Heart right ventricle (tissue), 16 donors: ENCODE measurements at regions of chr4 and their contacts with region 1.

Region 1: DNA sequence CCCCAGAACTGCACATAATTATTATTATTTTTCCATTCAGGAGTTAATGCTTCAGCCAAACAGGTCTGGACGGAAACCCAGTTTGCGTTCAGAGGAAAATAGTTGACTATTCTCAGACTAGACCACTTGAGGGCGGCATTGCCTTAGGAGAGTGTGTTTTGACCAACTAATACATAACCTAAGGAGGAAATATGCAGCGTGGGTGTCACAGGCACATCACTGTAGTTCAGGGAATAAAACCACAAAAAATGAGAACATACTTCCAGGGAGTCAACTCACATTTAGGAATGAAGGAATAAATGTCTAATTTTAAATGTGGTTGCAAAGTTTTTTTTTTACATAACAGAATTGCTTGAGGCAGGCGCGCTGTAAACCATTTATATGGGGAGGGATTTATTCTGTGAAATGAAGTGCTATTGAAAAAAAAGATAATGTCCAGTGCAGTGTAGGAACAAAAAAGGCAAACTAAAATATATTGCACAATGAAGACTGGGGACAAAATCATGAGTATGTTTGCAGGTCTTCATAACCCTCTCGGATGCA is 93.3 kb downstream of the SYNPO2 start:
- DNase-seq: peak in 1 of 2 donors; percentile 79
- ATAC-seq: peak; percentile 54 to 89 (median 80)
- H3K4me3 ChIP-seq: peak overlapping the region in 1 of 10 donors; percentile 4
- H3K27ac ChIP-seq: peak overlapping the region in 5 of 10 donors; percentile 40 to 76 (median 64)
- H3K4me1 ChIP-seq: peaks cover 19 to 75% (median 53%) of the 10 kb centered on the region in 9 donors
- H3K27me3 ChIP-seq: no peaks in the 10 kb centered on the region
- CTCF ChIP-seq: peak; percentile 60 to 88 (median 79)

Region 2: GRCh38 chr4:118278473-118279274 is 703.2 kb before region 1 on chr4:
- intact Hi-C with region 1: no loop called
- DNase-seq: peak; percentile 93
- ATAC-seq: peak; percentile 97 to 100 (median 99)
- H3K4me3 ChIP-seq: peak overlapping the region; percentile 54 to 93 (median 80)
- H3K27ac ChIP-seq: peak overlapping the region; percentile 82 to 98 (median 93)
- H3K4me1 ChIP-seq: peaks cover 3 to 39% (median 26%) of the 10 kb centered on the region in 9 donors
- H3K27me3 ChIP-seq: no peaks in the 10 kb centered on the region
- CTCF ChIP-seq: no peak

Region 3: DNA sequence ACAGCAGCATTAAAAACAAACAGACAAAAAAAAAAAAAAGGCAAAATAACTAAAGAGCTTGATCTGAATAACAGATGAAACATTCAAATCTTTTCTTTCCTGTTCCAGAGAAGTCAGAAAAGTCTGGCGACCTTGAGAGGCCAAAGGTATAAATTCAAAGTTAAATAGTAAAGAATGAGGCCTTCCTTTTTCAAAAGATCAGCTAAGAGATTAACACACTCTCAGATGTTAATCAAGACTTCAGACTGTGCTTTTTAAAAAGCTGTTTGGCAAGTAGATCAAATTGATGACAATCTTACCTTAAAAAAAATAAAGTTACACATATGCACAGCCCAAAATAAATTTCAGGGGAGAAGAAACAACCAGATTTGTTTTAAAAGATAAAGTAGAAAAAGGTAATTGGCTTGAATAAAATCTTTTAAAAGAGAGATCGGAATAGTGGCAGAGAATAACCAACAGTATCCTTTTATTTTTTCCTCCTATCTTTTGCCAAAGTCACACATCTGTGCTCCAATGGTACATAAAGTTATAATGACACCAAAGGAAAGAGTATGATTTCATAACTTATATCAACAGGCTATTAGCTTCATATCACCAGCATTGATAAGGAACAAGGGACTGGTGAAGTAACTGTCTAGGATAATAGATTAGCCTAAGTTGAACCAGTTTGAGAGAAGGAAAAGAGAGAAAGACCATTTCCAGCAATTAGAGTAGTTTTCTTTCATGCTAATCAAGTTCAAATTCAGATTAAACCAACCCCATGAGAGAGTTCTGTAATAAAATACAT is 226.3 kb before region 1 on chr4:
- intact Hi-C with region 1: no loop called
- DNase-seq: no peak
- ATAC-seq: no peak
- H3K4me3 ChIP-seq: no peak overlapping the region
- H3K27ac ChIP-seq: peak overlapping the region; percentile 20 to 77 (median 64)
- H3K4me1 ChIP-seq: peaks cover 8 to 98% (median 87%) of the 10 kb centered on the region in 9 donors
- H3K27me3 ChIP-seq: no peaks in the 10 kb centered on the region
- CTCF ChIP-seq: no peak

Region 4: GRCh38 chr4:118798658-118799057 is 183.3 kb before region 1 on chr4:
- intact Hi-C with region 1: no loop called
- DNase-seq: no peak
- ATAC-seq: peak in 1 of 8 donors; percentile 22
- H3K4me3 ChIP-seq: no peak overlapping the region
- H3K27ac ChIP-seq: no peak overlapping the region
- H3K4me1 ChIP-seq: peaks cover 0 to 13% (median 6%) of the 10 kb centered on the region in 9 donors
- H3K27me3 ChIP-seq: no peaks in the 10 kb centered on the region
- CTCF ChIP-seq: no peak

Region 5: DNA sequence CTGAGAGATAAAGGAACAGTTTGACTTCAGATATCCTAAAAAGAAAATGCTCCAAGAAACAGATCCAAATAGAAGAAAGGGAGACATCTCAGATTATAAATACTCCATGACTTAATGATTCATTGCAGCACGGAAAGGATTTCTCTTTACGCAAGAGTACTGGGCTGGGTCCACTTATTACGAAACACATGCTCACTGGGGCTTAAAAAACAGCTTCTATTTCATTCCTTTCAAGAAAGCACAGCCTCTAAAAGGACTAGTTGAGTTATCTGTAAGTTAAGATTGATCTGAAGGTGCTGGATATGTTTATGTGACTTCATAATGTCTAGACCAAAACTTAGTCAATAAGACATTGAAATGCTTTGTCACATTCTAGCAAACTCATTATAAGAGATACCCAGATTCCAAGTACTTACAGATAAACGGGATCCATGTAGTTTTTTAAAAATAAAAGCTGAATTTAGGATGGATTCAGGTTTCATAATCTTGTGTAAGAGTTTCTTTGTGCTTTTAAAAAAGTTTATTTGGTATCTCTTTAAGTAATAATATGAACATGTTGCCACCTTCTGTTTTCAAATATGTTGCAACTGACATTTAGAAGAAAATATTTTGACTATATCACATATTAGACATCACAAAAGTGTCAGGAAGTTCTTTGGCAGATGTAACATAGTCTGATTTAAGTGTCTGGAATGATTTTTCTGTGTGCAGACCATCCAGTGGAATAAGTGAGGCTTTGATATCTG is 44.2 kb after region 1 on chr4:
- intact Hi-C with region 1: loop called in 3 of 10 experiments (anchors 5 to 10 kb)
- DNase-seq: peak in 1 of 2 donors; percentile 50
- ATAC-seq: peak; percentile 69 to 91 (median 89)
- H3K4me3 ChIP-seq: peak overlapping the region in 4 of 10 donors; percentile 5 to 40 (median 23)
- H3K27ac ChIP-seq: peak overlapping the region; percentile 41 to 92 (median 86)
- H3K4me1 ChIP-seq: peaks cover 7 to 65% (median 43%) of the 10 kb centered on the region in 9 donors
- H3K27me3 ChIP-seq: no peaks in the 10 kb centered on the region
- CTCF ChIP-seq: peak in 1 of 9 donors; percentile 12

Region 6: DNA sequence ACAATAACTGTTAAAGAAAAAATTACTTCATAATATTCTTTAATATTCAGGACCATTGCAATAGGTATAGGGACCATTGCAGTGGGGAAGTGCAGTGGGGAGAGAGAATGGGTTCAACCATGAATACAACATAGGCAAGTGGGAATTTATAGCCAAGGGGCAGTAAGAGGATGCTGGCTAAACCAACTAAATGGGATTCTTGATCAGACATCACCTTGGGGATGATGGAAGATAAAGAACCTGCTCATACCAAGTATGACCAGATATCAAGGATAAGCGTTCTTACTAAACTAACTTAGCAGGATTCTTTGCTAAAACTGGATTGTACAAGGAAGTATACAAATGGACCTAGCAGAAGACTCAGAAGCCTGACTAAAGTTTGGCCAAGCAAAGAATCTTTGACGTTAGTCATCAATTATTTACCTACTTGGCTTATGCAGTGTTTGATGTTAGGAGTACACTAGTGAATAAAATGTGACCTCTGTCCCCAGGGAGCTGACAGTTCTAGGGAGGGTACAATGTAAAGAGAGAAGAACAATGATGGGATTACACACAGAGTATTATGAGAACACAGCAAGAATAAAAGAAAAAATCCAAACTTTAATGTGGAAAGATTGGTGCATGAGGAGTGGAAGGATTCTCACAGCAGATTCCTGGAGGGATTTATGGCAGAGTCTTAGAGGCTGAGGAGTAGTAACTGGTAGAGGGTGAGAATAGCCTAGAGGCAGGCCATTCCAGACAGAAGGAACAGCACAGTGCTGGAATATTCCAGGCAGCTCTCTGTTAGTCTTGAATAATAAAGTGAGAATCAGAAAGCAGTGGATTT is 99.0 kb after region 1 on chr4:
- intact Hi-C with region 1: loop called in 1 of 10 experiments (anchors 5 kb)
- DNase-seq: no peak
- ATAC-seq: peak in 3 of 8 donors; percentile 23 to 56 (median 33)
- H3K4me3 ChIP-seq: no peak overlapping the region
- H3K27ac ChIP-seq: peak overlapping the region in 6 of 10 donors; percentile 10 to 70 (median 38)
- H3K4me1 ChIP-seq: peaks cover 0 to 16% (median 8%) of the 10 kb centered on the region in 9 donors
- H3K27me3 ChIP-seq: no peaks in the 10 kb centered on the region
- CTCF ChIP-seq: no peak

Region 7: DNA sequence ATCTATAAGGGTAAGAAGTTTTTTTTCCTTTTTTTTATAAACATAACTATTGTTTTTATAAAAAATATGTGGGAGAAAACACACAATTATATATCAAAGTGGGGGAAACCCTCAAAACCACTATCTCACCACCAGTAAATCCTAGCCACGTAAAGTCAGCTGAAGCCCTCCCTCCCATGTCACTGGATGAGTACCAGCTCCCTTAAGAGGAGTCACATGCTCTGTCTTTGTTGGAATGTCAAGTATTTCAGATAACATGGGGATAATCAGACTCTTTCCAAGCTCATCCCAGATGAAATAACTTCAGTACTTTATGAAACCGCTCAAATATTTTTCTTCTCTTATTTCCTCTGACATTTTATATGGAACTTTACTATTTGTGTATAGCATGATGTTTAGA is 156.1 kb after region 1 on chr4:
- intact Hi-C with region 1: loop called in 3 of 10 experiments (anchors 5 to 10 kb)
- DNase-seq: no peak
- ATAC-seq: peak in 6 of 8 donors; percentile 35 to 76 (median 70)
- H3K4me3 ChIP-seq: peak overlapping the region; percentile 11 to 60 (median 47)
- H3K27ac ChIP-seq: peak overlapping the region in 9 of 10 donors; percentile 75 to 93 (median 87)
- H3K4me1 ChIP-seq: peaks cover 0 to 29% (median 16%) of the 10 kb centered on the region in 9 donors
- H3K27me3 ChIP-seq: no peaks in the 10 kb centered on the region
- CTCF ChIP-seq: no peak

Region 8: DNA sequence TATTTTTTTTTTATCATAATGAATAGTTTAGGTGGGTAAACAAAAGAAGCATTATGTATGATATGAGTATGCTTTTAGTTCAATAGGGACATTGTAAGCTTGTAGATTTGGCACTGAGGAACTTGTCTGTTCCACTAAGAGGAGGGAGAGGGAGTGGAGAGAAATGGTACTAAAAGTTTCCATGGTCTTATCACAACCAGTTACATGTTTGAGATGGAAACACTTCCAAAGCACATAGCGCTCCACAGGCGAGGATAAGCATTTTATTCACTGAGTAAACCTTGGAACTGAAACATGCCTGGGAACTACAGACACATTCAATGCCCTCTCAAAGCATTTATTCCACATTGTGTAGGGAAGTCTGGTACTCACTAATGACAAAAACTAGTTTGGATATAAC is 169.3 kb after region 1 on chr4:
- intact Hi-C with region 1: loop called in 3 of 10 experiments (anchors 5 to 10 kb)
- DNase-seq: peak in 1 of 2 donors; percentile 46
- ATAC-seq: peak; percentile 57 to 95 (median 90)
- H3K4me3 ChIP-seq: no peak overlapping the region
- H3K27ac ChIP-seq: peak overlapping the region; percentile 2 to 81 (median 68)
- H3K4me1 ChIP-seq: peaks cover 0 to 58% (median 15%) of the 10 kb centered on the region in 9 donors
- H3K27me3 ChIP-seq: no peaks in the 10 kb centered on the region
- CTCF ChIP-seq: peak in 1 of 9 donors; percentile 13

Region 9: GRCh38 chr4:119162174-119162573 is 180.3 kb after region 1 on chr4:
- intact Hi-C with region 1: loop called in 2 of 10 experiments (anchors 10 kb)
- DNase-seq: no peak
- ATAC-seq: peak in 6 of 8 donors; percentile 35 to 45 (median 40)
- H3K4me3 ChIP-seq: no peak overlapping the region
- H3K27ac ChIP-seq: peak overlapping the region in 1 of 10 donors; percentile 13
- H3K4me1 ChIP-seq: peaks cover 0 to 52% (median 0%) of the 10 kb centered on the region in 9 donors
- H3K27me3 ChIP-seq: no peaks in the 10 kb centered on the region
- CTCF ChIP-seq: no peak

Region 10: GRCh38 chr4:119197772-119198212 is 215.9 kb after region 1 on chr4:
- intact Hi-C with region 1: no loop called
- DNase-seq: no peak
- ATAC-seq: no peak
- H3K4me3 ChIP-seq: no peak overlapping the region
- H3K27ac ChIP-seq: no peak overlapping the region
- H3K4me1 ChIP-seq: no peaks in the 10 kb centered on the region
- H3K27me3 ChIP-seq: no peaks in the 10 kb centered on the region
- CTCF ChIP-seq: no peak

Region 11: GRCh38 chr4:119212234-119212963 is 230.5 kb after region 1 on chr4 and contains the start of gene USP53:
- intact Hi-C with region 1: loop called in 2 of 10 experiments (anchors 5 to 10 kb)
- DNase-seq: peak; percentile 96 to 97
- ATAC-seq: peak; percentile 96 to 99 (median 98)
- H3K4me3 ChIP-seq: peak within 1 kb of the TSS; percentile 69 to 93 (median 82)
- H3K27ac ChIP-seq: peak within 1 kb of the TSS; percentile 92 to 97 (median 96)
- H3K4me1 ChIP-seq: peaks cover 0 to 44% (median 19%) of the 10 kb centered on the region in 9 donors
- H3K27me3 ChIP-seq: no peaks in the 10 kb centered on the region
- CTCF ChIP-seq: peak in 1 of 9 donors; percentile 5
- total RNA-seq, gene USP53: 26.4 to 64.6 (median 41.8) TPM